Mammary epithelial cell (primary cell): ENCODE measurements at regions of chr2 and their contacts with region 1.

Region 1: GRCh38 chr2:111178730-111179405 is 58.2 kb downstream of the BCL2L11 start:
- DNase-seq: peak; percentile 49
- H3K4me3 ChIP-seq: no peak overlapping the region
- H3K27ac ChIP-seq: no peak overlapping the region
- H3K4me1 ChIP-seq: peaks cover 6% of the 10 kb centered on the region
- H3K27me3 ChIP-seq: no peaks in the 10 kb centered on the region
- CTCF ChIP-seq: no peak

Region 2: DNA sequence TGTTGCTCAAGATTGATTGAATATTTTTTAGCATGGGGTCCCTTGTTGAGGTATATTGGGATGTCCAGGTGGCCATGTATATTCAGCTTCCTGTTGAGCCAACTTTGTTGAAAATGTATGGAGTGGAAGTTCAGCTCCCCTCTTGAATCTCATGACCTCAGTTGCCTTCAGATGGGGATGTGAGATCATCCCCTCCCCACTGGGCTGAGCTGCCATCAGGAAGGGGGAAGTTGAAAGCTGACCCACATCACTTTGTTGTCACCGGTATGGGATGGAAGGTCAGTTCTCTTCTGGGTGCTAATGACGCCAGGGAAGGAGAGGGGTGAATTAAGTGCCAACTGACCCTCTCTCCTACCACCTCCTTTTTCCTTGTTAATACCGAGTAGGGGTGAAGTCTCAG is 412.6 kb before region 1 on chr2:
- CTCF ChIA-PET with region 1: no interaction called
- dilution Hi-C with region 1: no loop called
- in situ Hi-C with region 1: no loop called
- intact Hi-C with region 1: no loop called
- DNase-seq: no peak
- H3K4me3 ChIP-seq: no peak overlapping the region
- H3K27ac ChIP-seq: no peak overlapping the region
- H3K4me1 ChIP-seq: no peaks in the 10 kb centered on the region
- H3K27me3 ChIP-seq: peaks cover 2% of the 10 kb centered on the region
- CTCF ChIP-seq: no peak

Region 3: DNA sequence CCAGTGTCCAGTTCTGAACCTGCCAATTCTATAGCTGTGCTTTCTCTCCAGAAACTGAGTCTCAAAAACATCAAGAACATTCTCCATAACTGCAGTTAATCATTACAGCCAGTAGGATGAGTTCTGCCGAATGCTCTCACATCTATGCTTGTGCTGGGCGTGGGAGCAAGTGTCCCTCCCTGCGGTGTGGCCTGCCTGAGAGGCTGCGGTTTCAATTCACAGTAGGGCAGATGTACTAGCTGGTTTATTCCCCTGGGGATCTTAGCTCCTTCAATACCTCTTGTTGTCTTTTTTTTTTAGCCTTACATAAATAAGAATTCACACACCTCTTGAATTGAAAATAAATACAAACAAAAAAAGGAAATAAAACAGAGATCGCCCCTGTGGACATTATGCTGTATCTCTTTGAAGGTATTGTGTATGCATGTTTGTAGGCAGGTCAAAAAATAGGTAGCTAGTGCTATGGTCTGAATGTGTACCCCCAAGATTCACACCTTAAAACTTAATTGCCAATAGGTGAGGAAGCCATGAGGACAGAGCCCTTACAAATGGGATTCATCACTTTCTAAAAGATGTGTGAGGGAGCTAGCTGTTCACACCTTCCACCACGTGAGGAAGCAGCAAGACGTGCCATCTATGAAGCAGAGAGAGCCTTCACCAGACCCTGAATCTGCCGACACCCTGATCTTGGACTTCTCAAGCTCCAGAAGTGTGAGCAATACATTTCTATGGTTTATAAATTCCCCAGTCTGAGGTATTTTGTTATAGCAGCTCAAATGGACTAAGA is 16.2 kb after region 1 on chr2:
- CTCF ChIA-PET with region 1: interaction called, 24 read pairs
- dilution Hi-C with region 1: no loop called
- in situ Hi-C with region 1: no loop called
- intact Hi-C with region 1: no loop called
- DNase-seq: no peak
- H3K4me3 ChIP-seq: no peak overlapping the region
- H3K27ac ChIP-seq: no peak overlapping the region
- H3K4me1 ChIP-seq: no peaks in the 10 kb centered on the region
- H3K27me3 ChIP-seq: no peaks in the 10 kb centered on the region
- CTCF ChIP-seq: peak in 1 of 2 donors; percentile 8

Region 4: GRCh38 chr2:111239107-111239506 is 60.2 kb after region 1 on chr2:
- CTCF ChIA-PET with region 1: no interaction called
- dilution Hi-C with region 1: no loop called
- in situ Hi-C with region 1: no loop called
- intact Hi-C with region 1: no loop called
- DNase-seq: no peak
- H3K4me3 ChIP-seq: no peak overlapping the region
- H3K27ac ChIP-seq: no peak overlapping the region
- H3K4me1 ChIP-seq: peaks cover 20% of the 10 kb centered on the region
- H3K27me3 ChIP-seq: no peaks in the 10 kb centered on the region
- CTCF ChIP-seq: no peak